CD8-positive, alpha-beta T cell (primary cell): ENCODE measurements at regions of chr14 and their contacts with region 1.

Region 1: DNA sequence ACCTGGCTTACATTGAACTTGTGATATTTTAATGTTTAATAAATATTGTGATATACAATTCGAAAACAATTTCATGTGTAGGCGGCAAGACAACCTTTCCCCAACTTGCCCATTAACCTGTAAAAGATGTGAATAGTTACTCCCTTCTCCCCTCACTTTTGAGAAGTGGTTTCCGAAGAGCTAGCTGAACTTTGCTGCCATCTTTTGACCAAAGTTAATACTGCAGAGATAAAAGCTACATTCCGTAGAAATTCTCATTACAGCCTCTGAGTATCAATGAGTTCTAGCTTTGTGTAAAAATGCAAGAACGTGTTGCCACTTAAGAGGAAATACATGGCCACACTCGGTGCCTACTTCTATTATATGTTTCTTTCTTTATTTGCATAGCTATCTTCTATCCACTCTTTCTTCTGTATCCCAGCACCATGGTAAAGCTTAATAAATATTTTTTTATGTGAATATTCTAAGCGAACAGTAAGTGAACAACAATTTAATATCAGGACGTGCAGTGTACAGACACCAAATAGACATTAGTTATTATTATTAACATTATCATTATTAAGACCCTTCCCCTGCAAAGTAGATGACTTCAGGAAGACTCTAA is 105.1 kb upstream of the TMEM260 start:
- DNase-seq: peak in 2 of 9 experiments; percentile 48 to 56
- ATAC-seq: no peak
- H3K4me3 ChIP-seq: no peak overlapping the region
- H3K4me3 Mint-ChIP-seq: no peak overlapping the region
- H3K27ac ChIP-seq: no peak overlapping the region
- H3K27ac Mint-ChIP-seq: no peak overlapping the region
- H3K4me1 ChIP-seq: no peaks in the 10 kb centered on the region
- H3K4me1 Mint-ChIP-seq: no peaks in the 10 kb centered on the region
- H3K27me3 ChIP-seq: no peaks in the 10 kb centered on the region
- H3K27me3 Mint-ChIP-seq: peaks cover 8% of the 10 kb centered on the region
- CTCF ChIP-seq: peak; percentile 74

Region 2: DNA sequence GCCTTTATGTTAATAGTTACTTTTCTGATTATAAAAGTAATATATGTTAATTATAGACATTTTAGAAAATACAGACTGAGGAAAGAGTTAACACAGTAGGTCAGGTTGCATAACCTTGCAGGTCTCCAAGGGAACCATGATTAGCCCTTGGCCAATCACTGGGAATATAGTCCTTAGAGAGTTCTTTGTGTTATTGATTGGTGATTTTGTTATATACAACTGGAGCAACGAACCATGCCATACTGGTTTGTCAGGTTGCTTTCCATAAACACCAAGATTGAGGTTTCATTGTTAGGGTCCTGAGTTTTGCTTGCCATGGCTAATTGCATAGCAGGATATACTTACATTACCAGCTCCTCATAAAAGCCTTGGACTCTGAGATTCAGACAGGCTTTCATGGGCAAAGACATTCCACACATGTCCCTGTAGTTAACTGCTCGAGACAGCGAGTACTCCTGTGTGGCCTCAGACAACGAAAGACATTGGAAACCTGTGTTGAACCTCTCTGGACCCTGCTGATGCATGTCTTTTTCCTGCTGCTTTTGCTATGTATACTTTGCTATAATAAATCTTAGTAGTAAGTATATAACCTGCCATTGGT is 1389.4 kb before region 1 on chr14:
- CTCF ChIA-PET with region 1: no interaction called
- POLR2A ChIA-PET with region 1: no interaction called
- intact Hi-C with region 1: loop called in 1 of 2 experiments (anchors 10 kb)
- DNase-seq: peak in 1 of 9 experiments; percentile 5
- ATAC-seq: no peak
- H3K4me3 ChIP-seq: no peak overlapping the region
- H3K4me3 Mint-ChIP-seq: no peak overlapping the region
- H3K27ac ChIP-seq: no peak overlapping the region
- H3K27ac Mint-ChIP-seq: no peak overlapping the region
- H3K4me1 ChIP-seq: no peaks in the 10 kb centered on the region
- H3K4me1 Mint-ChIP-seq: peaks cover 3% of the 10 kb centered on the region
- H3K27me3 ChIP-seq: no peaks in the 10 kb centered on the region
- H3K27me3 Mint-ChIP-seq: no peaks in the 10 kb centered on the region
- CTCF ChIP-seq: no peak

Region 3: GRCh38 chr14:55446218-55446654 is 1028.3 kb before region 1 on chr14:
- CTCF ChIA-PET with region 1: interaction called, 25 read pairs
- POLR2A ChIA-PET with region 1: no interaction called
- intact Hi-C with region 1: loop called in 1 of 2 experiments (anchors 2 kb)
- DNase-seq: peak; percentile 3 to 72 (median 53)
- ATAC-seq: no peak
- H3K4me3 ChIP-seq: no peak overlapping the region
- H3K4me3 Mint-ChIP-seq: no peak overlapping the region
- H3K27ac ChIP-seq: no peak overlapping the region
- H3K27ac Mint-ChIP-seq: no peak overlapping the region
- H3K4me1 ChIP-seq: no peaks in the 10 kb centered on the region
- H3K4me1 Mint-ChIP-seq: peaks cover 3% of the 10 kb centered on the region
- H3K27me3 ChIP-seq: no peaks in the 10 kb centered on the region
- H3K27me3 Mint-ChIP-seq: peaks cover 3% of the 10 kb centered on the region
- CTCF ChIP-seq: peak; percentile 80

Region 4: GRCh38 chr14:55731881-55732498 is 742.5 kb before region 1 on chr14:
- CTCF ChIA-PET with region 1: interaction called, 50 read pairs
- POLR2A ChIA-PET with region 1: no interaction called
- intact Hi-C with region 1: loop called (anchors 1 kb)
- DNase-seq: peak; percentile 18 to 61 (median 56)
- ATAC-seq: no peak
- H3K4me3 ChIP-seq: no peak overlapping the region
- H3K4me3 Mint-ChIP-seq: no peak overlapping the region
- H3K27ac ChIP-seq: no peak overlapping the region
- H3K27ac Mint-ChIP-seq: no peak overlapping the region
- H3K4me1 ChIP-seq: no peaks in the 10 kb centered on the region
- H3K4me1 Mint-ChIP-seq: no peaks in the 10 kb centered on the region
- H3K27me3 ChIP-seq: no peaks in the 10 kb centered on the region
- H3K27me3 Mint-ChIP-seq: no peaks in the 10 kb centered on the region
- CTCF ChIP-seq: peak; percentile 65

Region 5: DNA sequence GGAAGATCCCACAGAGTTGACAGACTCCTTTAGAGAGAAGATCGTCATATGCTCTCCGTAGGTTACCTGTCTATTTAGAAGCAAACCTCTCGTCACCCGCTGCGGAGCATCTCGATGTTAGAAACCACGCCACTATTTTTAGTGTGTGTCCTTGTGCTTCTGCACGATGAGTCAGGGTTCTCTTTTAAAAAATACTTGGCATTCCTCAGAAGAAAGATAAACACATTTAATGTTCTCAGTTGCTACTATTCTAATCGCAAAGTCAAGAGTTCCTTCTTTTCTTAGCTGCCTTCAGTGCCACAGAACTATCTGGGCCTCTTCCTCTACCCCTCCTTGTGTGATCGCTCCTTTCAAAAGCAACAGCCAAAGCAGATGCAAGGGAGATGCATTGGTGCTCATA is 163.9 kb before region 1 on chr14:
- CTCF ChIA-PET with region 1: no interaction called
- POLR2A ChIA-PET with region 1: no interaction called
- intact Hi-C with region 1: no loop called
- DNase-seq: no peak
- ATAC-seq: no peak
- H3K4me3 ChIP-seq: no peak overlapping the region
- H3K4me3 Mint-ChIP-seq: no peak overlapping the region
- H3K27ac ChIP-seq: no peak overlapping the region
- H3K27ac Mint-ChIP-seq: no peak overlapping the region
- H3K4me1 ChIP-seq: no peaks in the 10 kb centered on the region
- H3K4me1 Mint-ChIP-seq: no peaks in the 10 kb centered on the region
- H3K27me3 ChIP-seq: no peaks in the 10 kb centered on the region
- H3K27me3 Mint-ChIP-seq: no peaks in the 10 kb centered on the region
- CTCF ChIP-seq: no peak

Region 6: DNA sequence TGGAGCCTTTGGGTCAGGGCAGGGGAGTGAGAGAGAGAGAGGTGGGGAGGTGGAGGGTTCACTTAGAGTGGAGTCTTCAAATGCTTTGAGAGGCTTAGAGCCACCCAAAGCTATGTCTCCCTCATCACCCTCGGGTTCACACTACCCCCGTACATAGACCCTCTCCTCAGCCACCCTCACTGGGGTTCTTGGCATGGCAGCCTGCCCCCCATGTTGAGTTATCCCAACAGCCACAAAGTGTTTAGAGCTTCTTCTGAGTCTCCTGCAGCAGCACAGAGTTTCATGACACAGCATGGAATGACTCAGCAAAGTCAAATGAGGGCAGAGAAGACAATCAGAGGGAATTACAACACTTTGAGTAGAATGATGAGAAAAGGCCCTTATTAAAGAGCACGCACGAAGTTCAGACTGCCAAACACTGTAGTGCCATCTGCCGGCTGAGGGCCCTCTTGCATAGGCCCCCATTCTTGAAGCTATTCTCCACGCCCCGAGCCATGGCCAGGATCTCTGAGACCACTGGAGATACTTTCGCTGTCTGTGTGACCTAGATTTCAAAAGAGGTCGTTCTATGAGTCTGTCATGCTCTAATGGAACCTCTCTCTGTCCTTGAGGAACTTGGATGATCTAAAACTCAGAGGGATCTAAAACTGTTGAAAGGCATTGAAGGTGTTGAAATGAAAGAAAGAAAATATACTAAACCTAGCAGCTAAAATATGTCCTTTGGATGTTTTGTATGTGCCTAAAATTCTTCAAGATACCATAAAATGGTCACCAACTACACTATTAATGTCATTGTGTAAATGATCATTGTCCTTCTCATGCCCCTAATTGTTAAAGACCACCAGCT is 134.4 kb before region 1 on chr14:
- CTCF ChIA-PET with region 1: interaction called, 3 read pairs
- POLR2A ChIA-PET with region 1: no interaction called
- intact Hi-C with region 1: loop called in 1 of 2 experiments (anchors 10 kb)
- DNase-seq: peak; percentile 18 to 67 (median 53)
- ATAC-seq: peak; percentile 58
- H3K4me3 ChIP-seq: no peak overlapping the region
- H3K4me3 Mint-ChIP-seq: no peak overlapping the region
- H3K27ac ChIP-seq: no peak overlapping the region
- H3K27ac Mint-ChIP-seq: no peak overlapping the region
- H3K4me1 ChIP-seq: no peaks in the 10 kb centered on the region
- H3K4me1 Mint-ChIP-seq: peaks cover 3% of the 10 kb centered on the region
- H3K27me3 ChIP-seq: no peaks in the 10 kb centered on the region
- H3K27me3 Mint-ChIP-seq: no peaks in the 10 kb centered on the region
- CTCF ChIP-seq: peak; percentile 52

Region 7: GRCh38 chr14:56630707-56631106 is 156.2 kb after region 1 on chr14:
- CTCF ChIA-PET with region 1: no interaction called
- POLR2A ChIA-PET with region 1: no interaction called
- intact Hi-C with region 1: no loop called
- DNase-seq: no peak
- ATAC-seq: no peak
- H3K4me3 ChIP-seq: no peak overlapping the region
- H3K4me3 Mint-ChIP-seq: no peak overlapping the region
- H3K27ac ChIP-seq: no peak overlapping the region
- H3K27ac Mint-ChIP-seq: no peak overlapping the region
- H3K4me1 ChIP-seq: no peaks in the 10 kb centered on the region
- H3K4me1 Mint-ChIP-seq: no peaks in the 10 kb centered on the region
- H3K27me3 ChIP-seq: no peaks in the 10 kb centered on the region
- H3K27me3 Mint-ChIP-seq: no peaks in the 10 kb centered on the region
- CTCF ChIP-seq: no peak

Region 8: GRCh38 chr14:57153276-57153675 is 678.8 kb after region 1 on chr14:
- CTCF ChIA-PET with region 1: no interaction called
- POLR2A ChIA-PET with region 1: no interaction called
- intact Hi-C with region 1: no loop called
- DNase-seq: no peak
- ATAC-seq: no peak
- H3K4me3 ChIP-seq: no peak overlapping the region
- H3K4me3 Mint-ChIP-seq: no peak overlapping the region
- H3K27ac ChIP-seq: no peak overlapping the region
- H3K27ac Mint-ChIP-seq: no peak overlapping the region
- H3K4me1 ChIP-seq: no peaks in the 10 kb centered on the region
- H3K4me1 Mint-ChIP-seq: no peaks in the 10 kb centered on the region
- H3K27me3 ChIP-seq: no peaks in the 10 kb centered on the region
- H3K27me3 Mint-ChIP-seq: peaks cover 9% of the 10 kb centered on the region
- CTCF ChIP-seq: no peak